ENCODE measurements at regions of chr11 and their contacts with region 1.

Region 1: GRCh38 chr11:77187776-77188632 is 60.0 kb downstream of the MYO7A start:
- DNase-seq: peak; percentile 90
- H3K4me3 ChIP-seq: peak overlapping the region in 1 of 2 experiments; percentile 14; a peak in 1 of 4 replicates
- H3K27ac ChIP-seq: no peak overlapping the region
- H3K4me1 ChIP-seq: no peaks in the 10 kb centered on the region
- H3K27me3 ChIP-seq: no peaks in the 10 kb centered on the region
- CTCF ChIP-seq: peak; percentile 93
- EP300 ChIP-seq: no peak
- RAD21 ChIP-seq: peak; percentile 93

Region 2: DNA sequence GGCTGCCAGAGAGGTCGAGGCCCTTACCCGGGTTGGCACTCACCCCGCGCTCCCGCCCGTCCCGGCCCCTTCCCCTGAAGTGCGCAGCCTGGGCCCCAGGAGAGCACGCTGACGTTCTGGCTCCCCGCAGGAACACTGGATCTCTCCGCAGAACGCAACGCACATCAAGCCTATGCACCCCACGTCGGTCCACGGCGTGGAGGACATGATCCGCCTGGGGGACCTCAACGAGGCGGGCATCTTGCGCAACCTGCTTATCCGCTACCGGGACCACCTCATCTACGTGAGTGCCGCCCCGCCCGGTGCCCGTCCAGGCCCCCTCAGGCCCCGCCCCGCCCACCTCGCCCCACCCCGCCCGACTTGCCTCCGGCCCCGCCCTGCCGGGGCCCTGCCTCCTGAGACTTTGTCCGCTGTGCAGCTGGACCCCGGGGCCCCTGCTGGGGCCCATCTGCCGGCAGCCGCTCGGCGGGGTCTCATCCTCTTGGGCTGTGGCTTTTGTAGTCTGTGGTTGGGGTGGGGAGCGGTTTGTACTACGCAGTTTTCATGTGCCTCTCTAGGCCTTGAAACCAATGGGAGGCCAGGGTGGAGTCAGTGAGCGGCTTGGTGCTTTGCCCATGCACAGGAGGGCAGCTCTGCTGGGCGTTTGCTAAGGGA is 40.2 kb before region 1 on chr11:
- CTCF ChIA-PET with region 1: interaction called, 15 read pairs
- POLR2A ChIA-PET with region 1: no interaction called
- DNase-seq: no peak
- H3K4me3 ChIP-seq: no peak overlapping the region
- H3K27ac ChIP-seq: no peak overlapping the region
- H3K4me1 ChIP-seq: peaks cover 0 to 23% of the 10 kb centered on the region in 2 experiments; a peak in 1 of 4 replicates
- H3K27me3 ChIP-seq: no peaks in the 10 kb centered on the region
- CTCF ChIP-seq: no peak
- EP300 ChIP-seq: no peak
- RAD21 ChIP-seq: no peak

Region 3: DNA sequence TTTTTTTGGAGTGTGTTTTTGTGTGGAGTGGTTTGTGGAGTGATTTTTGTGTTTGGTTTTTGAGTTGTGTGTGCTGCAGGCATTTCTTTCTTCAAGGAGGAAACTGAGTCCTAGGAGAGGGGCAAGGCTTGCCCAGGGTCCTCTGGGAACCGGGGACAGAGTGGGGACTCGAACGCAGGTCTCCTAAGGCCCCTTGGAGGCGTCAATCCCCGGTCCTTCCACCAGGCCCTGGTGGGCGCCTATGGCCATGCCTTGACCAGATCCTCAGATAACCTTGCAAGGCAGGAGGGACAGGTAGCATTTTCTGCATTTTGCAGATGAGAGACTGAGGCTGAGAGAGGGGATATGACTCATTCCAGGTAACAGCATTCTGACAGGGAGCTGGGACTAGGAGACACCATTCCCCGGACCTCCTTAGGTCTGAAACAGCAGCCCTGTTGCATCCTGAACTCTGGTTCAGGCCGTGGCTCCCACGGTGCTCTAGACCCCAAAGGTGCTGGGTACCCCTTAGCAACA is 20.8 kb before region 1 on chr11:
- CTCF ChIA-PET with region 1: interaction called, 16 read pairs
- POLR2A ChIA-PET with region 1: no interaction called
- DNase-seq: no peak
- H3K4me3 ChIP-seq: no peak overlapping the region
- H3K27ac ChIP-seq: no peak overlapping the region
- H3K4me1 ChIP-seq: no peaks in the 10 kb centered on the region
- H3K27me3 ChIP-seq: no peaks in the 10 kb centered on the region
- CTCF ChIP-seq: no peak
- EP300 ChIP-seq: no peak
- RAD21 ChIP-seq: no peak

Region 4: GRCh38 chr11:77198440-77198849 is 10.4 kb after region 1 on chr11:
- CTCF ChIA-PET with region 1: interaction called, 15 read pairs
- POLR2A ChIA-PET with region 1: no interaction called
- DNase-seq: peak; percentile 62
- H3K4me3 ChIP-seq: no peak overlapping the region
- H3K27ac ChIP-seq: no peak overlapping the region
- H3K4me1 ChIP-seq: no peaks in the 10 kb centered on the region
- H3K27me3 ChIP-seq: no peaks in the 10 kb centered on the region
- CTCF ChIP-seq: peak; percentile 41
- EP300 ChIP-seq: no peak
- RAD21 ChIP-seq: peak; percentile 24

Region 5: DNA sequence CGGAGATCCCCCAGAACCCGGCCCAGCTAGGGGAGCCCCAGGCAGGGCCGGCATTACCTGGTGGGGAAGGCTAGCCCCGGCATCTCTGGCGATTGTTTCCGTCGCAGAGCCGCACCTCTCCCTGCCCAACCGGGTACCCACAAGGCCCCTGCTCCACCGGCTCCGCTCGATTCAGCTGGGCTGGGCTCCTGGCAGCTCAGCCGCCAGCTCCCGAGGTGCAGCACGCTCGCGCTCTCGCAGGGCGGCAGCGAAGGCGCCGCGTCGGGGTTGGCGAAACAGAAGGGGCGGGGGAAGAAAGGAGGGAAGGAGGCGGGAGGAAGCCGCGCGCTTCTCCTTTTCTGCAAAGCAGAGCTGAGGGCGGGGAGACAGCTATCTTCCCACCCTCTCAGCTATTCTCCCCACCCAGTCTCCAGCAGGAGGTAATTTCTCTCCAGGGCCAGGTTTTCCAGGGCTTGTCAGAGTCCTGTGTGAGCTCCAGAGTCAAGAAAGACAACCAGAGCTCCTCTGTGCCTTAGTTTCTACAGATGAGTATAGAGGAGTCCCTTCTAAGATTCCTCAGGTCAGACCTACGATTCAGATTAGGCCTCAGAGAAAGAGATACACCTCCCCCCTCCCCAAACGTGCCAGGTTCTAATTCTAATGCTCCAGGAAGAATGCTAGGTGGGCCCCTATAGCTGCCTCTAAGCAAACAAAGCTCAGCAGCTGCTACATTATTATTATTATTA is 223.9 kb after region 1 on chr11:
- CTCF ChIA-PET with region 1: no interaction called
- POLR2A ChIA-PET with region 1: no interaction called
- DNase-seq: no peak
- H3K4me3 ChIP-seq: no peak overlapping the region
- H3K27ac ChIP-seq: no peak overlapping the region
- H3K4me1 ChIP-seq: peaks cover 10 to 11% of the 10 kb centered on the region in 2 experiments; a peak in 3 of 4 replicates
- H3K27me3 ChIP-seq: no peaks in the 10 kb centered on the region
- CTCF ChIP-seq: no peak
- EP300 ChIP-seq: no peak
- RAD21 ChIP-seq: no peak